WTC11 (cell line): ENCODE measurements at regions of chr15 and their contacts with region 1.

Region 1: GRCh38 chr15:74373731-74374647 is 6.5 kb upstream of the CYP11A1 start:
- DNase-seq: peak; percentile 97
- ATAC-seq: peak; percentile 92
- H3K4me3 Mint-ChIP-seq: peak overlapping the region; percentile 70
- H3K27ac Mint-ChIP-seq: peak overlapping the region; percentile 63; the same call in 1 of the 2 replicates
- H3K4me1 Mint-ChIP-seq: peaks cover 19% of the 10 kb centered on the region
- H3K27me3 Mint-ChIP-seq: no peaks in the 10 kb centered on the region; the same call in 1 of the 2 replicates
- CTCF ChIP-seq: peak; percentile 85

Region 2: GRCh38 chr15:74433592-74434262 is 59.7 kb after region 1 on chr15 and contains the start of gene SEMA7A:
- CTCF ChIA-PET with region 1: interaction called, 36 read pairs
- POLR2A ChIA-PET with region 1: no interaction called
- DNase-seq: peak; percentile 81
- ATAC-seq: peak; percentile 80
- H3K4me3 Mint-ChIP-seq: peak within 1 kb of the TSS; percentile 69
- H3K27ac Mint-ChIP-seq: peak within 1 kb of the TSS; percentile 53; the same call in 1 of the 2 replicates
- H3K4me1 Mint-ChIP-seq: peaks cover 46% of the 10 kb centered on the region
- H3K27me3 Mint-ChIP-seq: peaks cover 32% of the 10 kb centered on the region
- CTCF ChIP-seq: no peak
- total RNA-seq, gene SEMA7A: 13.7 to 17.9 TPM (median 14.2 TPM) in 3 replicates

Region 3: DNA sequence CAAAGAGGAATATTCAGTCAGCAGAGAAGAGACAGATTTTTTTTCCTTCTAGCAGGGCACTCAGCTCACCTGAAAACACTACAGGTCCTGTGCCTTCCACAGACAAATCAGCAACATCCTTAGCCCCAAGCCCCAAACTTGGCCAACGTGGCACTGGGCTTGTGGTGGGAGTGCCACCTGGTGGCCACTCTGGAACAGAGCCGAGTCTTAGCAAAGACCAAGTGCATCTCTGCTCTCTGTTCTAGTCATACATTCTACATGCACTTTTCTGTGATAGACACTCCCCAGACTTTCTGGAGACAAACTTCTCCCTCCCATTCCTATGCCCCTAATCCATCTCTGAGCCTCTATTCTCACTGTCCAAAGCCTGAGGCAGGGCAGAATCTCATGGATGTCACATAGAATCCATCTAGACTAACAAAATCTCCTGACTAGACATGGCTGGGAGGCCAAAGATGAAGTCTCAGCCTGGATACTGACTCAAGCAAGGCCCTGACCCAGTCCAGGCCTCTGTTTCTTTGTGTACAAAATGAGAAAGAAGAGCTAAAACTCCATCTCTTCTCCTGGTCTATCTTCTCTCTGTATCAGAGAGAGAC is 64.8 kb after region 1 on chr15:
- CTCF ChIA-PET with region 1: interaction called, 36 read pairs
- POLR2A ChIA-PET with region 1: interaction called, 3 read pairs
- DNase-seq: peak; percentile 78
- ATAC-seq: peak; percentile 70
- H3K4me3 Mint-ChIP-seq: no peak overlapping the region
- H3K27ac Mint-ChIP-seq: no peak overlapping the region
- H3K4me1 Mint-ChIP-seq: peaks cover 31% of the 10 kb centered on the region
- H3K27me3 Mint-ChIP-seq: peaks cover 20% of the 10 kb centered on the region
- CTCF ChIP-seq: peak; percentile 72

Region 4: GRCh38 chr15:74482661-74483060 is 108.7 kb after region 1 on chr15:
- CTCF ChIA-PET with region 1: interaction called, 11 read pairs
- POLR2A ChIA-PET with region 1: no interaction called
- DNase-seq: peak; percentile 26
- ATAC-seq: peak; percentile 100
- H3K4me3 Mint-ChIP-seq: no peak overlapping the region
- H3K27ac Mint-ChIP-seq: peak overlapping the region; percentile 83
- H3K4me1 Mint-ChIP-seq: peaks cover 11% of the 10 kb centered on the region
- H3K27me3 Mint-ChIP-seq: no peaks in the 10 kb centered on the region
- CTCF ChIP-seq: no peak